ENCODE measurements at regions of chrX and their contacts with region 1.

Region 1: GRCh38 chrX:56978172-56978571 is 17.2 kb downstream of the SPIN3 start:
- DNase-seq: peak; percentile 63
- H3K4me3 ChIP-seq: no peak overlapping the region
- H3K27ac ChIP-seq: no peak overlapping the region
- H3K4me1 ChIP-seq: no peaks in the 10 kb centered on the region
- H3K27me3 ChIP-seq: no peaks in the 10 kb centered on the region
- CTCF ChIP-seq: peak; percentile 74 to 78

Region 2: GRCh38 chrX:56744996-56745395 is 233.2 kb before region 1 on chrX:
- CTCF ChIA-PET with region 1: no interaction called
- dilution Hi-C with region 1: no loop called
- in situ Hi-C with region 1: no loop called
- intact Hi-C with region 1: loop called (anchors 5 kb)
- DNase-seq: peak; percentile 76
- H3K4me3 ChIP-seq: no peak overlapping the region
- H3K27ac ChIP-seq: no peak overlapping the region
- H3K4me1 ChIP-seq: peaks cover 18% of the 10 kb centered on the region
- H3K27me3 ChIP-seq: no peaks in the 10 kb centered on the region
- CTCF ChIP-seq: no peak